CD8-positive, alpha-beta memory T cell (primary cell): ENCODE measurements at regions of chr17 and their contacts with region 1.

Region 1: DNA sequence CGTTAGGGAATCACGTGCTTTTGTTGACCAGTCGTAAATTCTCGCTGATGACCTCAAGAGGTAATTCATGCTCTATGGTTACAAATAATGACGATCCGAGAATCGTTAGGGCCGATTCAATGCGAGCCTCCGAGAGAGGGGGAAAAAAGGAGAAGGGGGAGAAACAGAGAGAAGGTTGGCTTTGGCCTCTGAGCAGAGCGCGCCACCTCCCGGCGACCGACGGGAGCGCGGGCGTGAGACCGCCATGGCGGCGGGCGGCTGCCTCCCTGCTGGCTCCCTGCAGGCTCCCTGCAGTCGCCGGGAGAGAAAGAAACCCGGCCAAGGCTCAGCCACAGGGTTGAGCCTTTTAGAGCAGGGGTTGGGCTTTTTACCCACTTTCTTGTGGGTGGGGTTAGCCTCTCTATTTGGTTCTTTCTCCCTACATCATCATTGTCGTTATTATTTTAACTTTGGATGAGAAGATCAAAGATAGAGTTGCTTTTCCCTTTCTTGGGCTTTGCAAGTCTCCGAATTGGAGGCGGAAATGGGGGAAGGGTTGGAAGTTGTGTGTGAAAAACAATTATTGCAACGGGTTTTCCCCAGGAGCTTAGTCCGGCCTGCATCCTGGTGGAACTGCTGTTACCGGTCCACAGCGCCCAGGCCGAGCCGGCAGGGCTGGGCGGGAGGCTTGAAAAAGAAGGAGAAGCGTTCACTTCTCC is 410 bp upstream of the HOXB5 start:
- DNase-seq: peak; percentile 70 to 84 (median 75)
- H3K4me3 ChIP-seq: peak overlapping the region; percentile 61
- H3K4me3 Mint-ChIP-seq: peak overlapping the region; percentile 77 to 91 (median 86)
- H3K27ac ChIP-seq: no peak overlapping the region
- H3K27ac Mint-ChIP-seq: peak overlapping the region in 1 of 8 donors; percentile 12
- H3K4me1 ChIP-seq: peaks cover 41% of the 10 kb centered on the region
- H3K4me1 Mint-ChIP-seq: peaks cover 45 to 48% (median 48%) of the 10 kb centered on the region in 3 donors
- H3K27me3 ChIP-seq: peaks cover 56% of the 10 kb centered on the region
- H3K27me3 Mint-ChIP-seq: peaks cover 62 to 83% of the 10 kb centered on the region in 2 donors

Region 2: DNA sequence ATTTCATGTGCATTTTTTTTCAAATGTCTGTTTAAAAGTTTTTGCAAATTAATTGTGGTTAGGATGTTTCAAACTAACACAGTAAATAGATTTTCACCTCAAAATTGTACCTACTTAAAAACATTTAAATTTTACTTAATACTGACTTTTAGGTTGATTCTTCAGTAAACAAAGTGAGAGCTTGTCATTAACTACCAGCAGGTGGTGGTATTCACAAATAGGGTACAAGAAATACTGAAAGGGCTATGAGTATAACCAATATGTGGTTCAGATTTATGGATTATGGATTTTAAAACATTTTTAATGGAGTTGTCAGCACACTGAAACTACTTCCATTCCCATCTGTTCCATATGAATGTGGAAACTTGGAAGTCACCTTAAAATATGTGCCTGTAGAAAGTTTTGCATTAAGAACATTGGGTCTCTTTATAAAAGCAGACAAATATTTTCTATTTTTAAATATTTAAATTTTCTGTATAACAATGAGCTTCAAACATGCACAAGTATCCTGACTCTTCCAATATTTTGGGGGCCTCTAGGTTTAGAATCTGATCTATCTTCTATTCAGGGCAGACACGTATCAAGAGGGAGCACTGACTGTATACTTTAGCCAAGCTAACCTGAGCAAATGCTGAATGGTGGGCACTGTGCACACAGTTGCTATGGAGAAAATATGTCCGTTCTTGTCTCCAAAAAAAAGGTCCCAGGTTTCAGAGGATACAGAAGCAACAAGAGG is 330.8 kb before region 1 on chr17:
- CTCF ChIA-PET with region 1: interaction called, 10 read pairs
- POLR2A ChIA-PET with region 1: interaction called, 4 read pairs
- DNase-seq: no peak
- H3K4me3 ChIP-seq: no peak overlapping the region
- H3K4me3 Mint-ChIP-seq: no peak overlapping the region
- H3K27ac ChIP-seq: no peak overlapping the region
- H3K27ac Mint-ChIP-seq: no peak overlapping the region
- H3K4me1 ChIP-seq: peaks cover 8% of the 10 kb centered on the region
- H3K4me1 Mint-ChIP-seq: peaks cover 19 to 43% (median 36%) of the 10 kb centered on the region in 3 donors
- H3K27me3 ChIP-seq: no peaks in the 10 kb centered on the region
- H3K27me3 Mint-ChIP-seq: no peaks in the 10 kb centered on the region

Region 3: GRCh38 chr17:48307814-48308411 is 286.1 kb before region 1 on chr17:
- CTCF ChIA-PET with region 1: interaction called, 13 read pairs
- POLR2A ChIA-PET with region 1: no interaction called
- DNase-seq: peak; percentile 18 to 64 (median 29)
- H3K4me3 ChIP-seq: no peak overlapping the region
- H3K4me3 Mint-ChIP-seq: no peak overlapping the region
- H3K27ac ChIP-seq: no peak overlapping the region
- H3K27ac Mint-ChIP-seq: peak overlapping the region in 5 of 8 donors; percentile 0 to 22 (median 6)
- H3K4me1 ChIP-seq: no peaks in the 10 kb centered on the region
- H3K4me1 Mint-ChIP-seq: peaks cover 15 to 55% (median 44%) of the 10 kb centered on the region in 3 donors
- H3K27me3 ChIP-seq: no peaks in the 10 kb centered on the region
- H3K27me3 Mint-ChIP-seq: no peaks in the 10 kb centered on the region

Region 4: DNA sequence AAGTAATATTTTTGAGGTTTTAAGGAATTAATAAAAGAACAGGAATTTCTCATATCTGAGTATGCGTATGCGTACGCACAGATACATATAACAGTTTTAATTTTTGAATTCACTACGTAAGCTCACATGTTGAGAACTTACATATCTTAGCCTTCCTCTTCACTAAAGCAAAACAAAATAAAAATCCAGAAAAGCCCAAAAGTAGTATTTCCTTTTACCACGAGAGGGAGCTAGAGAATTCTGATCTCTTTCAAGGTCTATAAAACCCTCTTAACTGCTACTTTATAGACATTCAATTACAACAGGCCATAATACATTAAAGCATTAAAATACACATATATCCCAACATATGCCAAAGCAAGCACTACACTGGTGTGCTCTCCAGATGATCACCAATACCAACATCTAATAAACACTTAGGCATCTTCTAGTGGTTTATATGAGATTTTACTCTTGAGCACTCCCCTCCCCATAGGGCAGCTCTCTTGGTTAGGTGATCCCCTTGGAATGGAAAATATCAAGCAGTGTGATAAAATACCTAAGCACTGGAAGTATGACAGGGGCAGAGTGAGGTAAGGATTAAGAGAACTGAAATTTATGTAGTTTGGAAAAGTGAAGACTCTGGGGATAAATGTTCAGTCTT is 258.0 kb before region 1 on chr17:
- CTCF ChIA-PET with region 1: interaction called, 43 read pairs
- POLR2A ChIA-PET with region 1: no interaction called
- DNase-seq: peak in 2 of 5 donors; percentile 48 to 61
- H3K4me3 ChIP-seq: no peak overlapping the region
- H3K4me3 Mint-ChIP-seq: no peak overlapping the region
- H3K27ac ChIP-seq: no peak overlapping the region
- H3K27ac Mint-ChIP-seq: peak overlapping the region in 3 of 8 donors; percentile 7 to 51 (median 45)
- H3K4me1 ChIP-seq: peaks cover 6% of the 10 kb centered on the region
- H3K4me1 Mint-ChIP-seq: peaks cover 5 to 31% (median 18%) of the 10 kb centered on the region in 3 donors
- H3K27me3 ChIP-seq: no peaks in the 10 kb centered on the region
- H3K27me3 Mint-ChIP-seq: no peaks in the 10 kb centered on the region

Region 5: DNA sequence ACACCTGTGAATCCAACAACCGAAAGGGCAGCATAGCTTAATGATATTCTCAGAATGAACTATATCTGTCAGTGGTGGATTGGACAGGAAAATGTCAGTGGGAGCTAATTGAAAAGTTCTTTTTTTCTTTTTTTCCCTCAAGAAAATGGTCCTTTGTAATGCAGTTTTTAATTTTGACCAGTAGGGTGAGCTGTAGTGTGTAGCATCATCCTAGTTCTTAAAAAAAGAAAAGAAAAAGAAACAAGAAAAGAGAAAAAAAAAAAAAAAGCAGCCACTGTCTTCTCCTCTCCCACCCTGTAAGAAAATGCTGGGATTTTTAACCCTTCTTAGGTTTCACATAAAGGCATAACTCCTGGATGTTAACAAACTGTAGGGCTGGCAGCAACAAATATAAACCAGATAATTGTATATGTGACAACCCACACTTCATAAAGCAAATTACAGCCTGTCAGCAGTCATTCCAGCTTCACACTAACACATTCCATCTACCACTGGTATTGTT is 242.1 kb before region 1 on chr17:
- CTCF ChIA-PET with region 1: interaction called, 20 read pairs
- POLR2A ChIA-PET with region 1: no interaction called
- DNase-seq: peak in 2 of 5 donors; percentile 24 to 45
- H3K4me3 ChIP-seq: no peak overlapping the region
- H3K4me3 Mint-ChIP-seq: no peak overlapping the region
- H3K27ac ChIP-seq: no peak overlapping the region
- H3K27ac Mint-ChIP-seq: peak overlapping the region in 4 of 8 donors; percentile 25 to 50 (median 38)
- H3K4me1 ChIP-seq: peaks cover 8% of the 10 kb centered on the region
- H3K4me1 Mint-ChIP-seq: peaks cover 11 to 32% (median 28%) of the 10 kb centered on the region in 3 donors
- H3K27me3 ChIP-seq: no peaks in the 10 kb centered on the region
- H3K27me3 Mint-ChIP-seq: no peaks in the 10 kb centered on the region

Region 6: DNA sequence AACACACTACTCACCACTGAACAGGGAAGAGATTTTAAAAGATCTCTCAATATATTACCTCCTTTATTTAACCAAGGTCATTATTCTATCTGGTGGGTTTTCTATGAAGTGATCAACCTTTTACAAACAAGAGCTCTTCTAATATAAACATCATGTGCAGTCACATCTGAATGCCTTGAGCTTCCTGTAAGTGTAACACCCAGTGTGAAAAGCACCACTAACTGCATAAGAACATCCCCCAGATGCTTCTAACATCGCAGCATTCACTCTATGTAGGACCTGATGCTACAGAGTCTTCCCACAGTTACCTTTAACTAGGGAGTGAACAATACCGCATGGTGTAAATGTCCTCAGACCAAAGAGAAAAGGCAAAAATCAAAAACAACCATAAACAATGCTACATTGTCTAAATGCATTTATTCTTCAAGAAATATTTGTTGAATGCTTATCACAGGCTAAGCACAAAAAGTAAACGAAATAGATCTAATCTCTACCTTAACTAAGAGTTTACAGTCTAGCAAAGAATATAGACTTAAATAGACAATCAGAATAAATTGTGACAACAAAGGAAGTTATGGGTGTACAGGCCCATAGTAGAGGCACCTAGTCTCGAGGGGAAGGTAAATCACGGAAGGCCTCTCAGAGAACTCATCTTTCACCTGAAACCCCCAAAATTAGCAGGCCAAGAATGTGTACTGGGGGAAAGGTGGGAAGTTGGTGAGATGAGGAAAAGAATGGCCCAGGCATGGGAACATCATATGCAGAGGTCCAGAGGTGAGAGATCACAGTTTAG is 180.2 kb before region 1 on chr17:
- CTCF ChIA-PET with region 1: no interaction called
- POLR2A ChIA-PET with region 1: no interaction called
- DNase-seq: peak in 1 of 5 donors; percentile 18
- H3K4me3 ChIP-seq: no peak overlapping the region
- H3K4me3 Mint-ChIP-seq: peak overlapping the region; percentile 29 to 79 (median 70)
- H3K27ac ChIP-seq: no peak overlapping the region
- H3K27ac Mint-ChIP-seq: peak overlapping the region; percentile 80 to 96 (median 91)
- H3K4me1 ChIP-seq: peaks cover 82% of the 10 kb centered on the region
- H3K4me1 Mint-ChIP-seq: peaks cover 77 to 96% (median 90%) of the 10 kb centered on the region in 3 donors
- H3K27me3 ChIP-seq: no peaks in the 10 kb centered on the region
- H3K27me3 Mint-ChIP-seq: no peaks in the 10 kb centered on the region

Region 7: GRCh38 chr17:48492401-48493298 is 101.3 kb before region 1 on chr17:
- CTCF ChIA-PET with region 1: interaction called, 28 read pairs
- POLR2A ChIA-PET with region 1: interaction called, 3 read pairs
- DNase-seq: peak; percentile 43 to 78 (median 55)
- H3K4me3 ChIP-seq: peak overlapping the region; percentile 78
- H3K4me3 Mint-ChIP-seq: peak overlapping the region in 6 of 7 donors; percentile 41 to 81 (median 65)
- H3K27ac ChIP-seq: peak overlapping the region; percentile 57
- H3K27ac Mint-ChIP-seq: peak overlapping the region in 1 of 8 donors; percentile 78
- H3K4me1 ChIP-seq: peaks cover 11% of the 10 kb centered on the region
- H3K4me1 Mint-ChIP-seq: peaks cover 2 to 12% (median 4%) of the 10 kb centered on the region in 3 donors
- H3K27me3 ChIP-seq: peaks cover 8% of the 10 kb centered on the region
- H3K27me3 Mint-ChIP-seq: peaks cover 4 to 12% of the 10 kb centered on the region in 2 donors

Region 8: DNA sequence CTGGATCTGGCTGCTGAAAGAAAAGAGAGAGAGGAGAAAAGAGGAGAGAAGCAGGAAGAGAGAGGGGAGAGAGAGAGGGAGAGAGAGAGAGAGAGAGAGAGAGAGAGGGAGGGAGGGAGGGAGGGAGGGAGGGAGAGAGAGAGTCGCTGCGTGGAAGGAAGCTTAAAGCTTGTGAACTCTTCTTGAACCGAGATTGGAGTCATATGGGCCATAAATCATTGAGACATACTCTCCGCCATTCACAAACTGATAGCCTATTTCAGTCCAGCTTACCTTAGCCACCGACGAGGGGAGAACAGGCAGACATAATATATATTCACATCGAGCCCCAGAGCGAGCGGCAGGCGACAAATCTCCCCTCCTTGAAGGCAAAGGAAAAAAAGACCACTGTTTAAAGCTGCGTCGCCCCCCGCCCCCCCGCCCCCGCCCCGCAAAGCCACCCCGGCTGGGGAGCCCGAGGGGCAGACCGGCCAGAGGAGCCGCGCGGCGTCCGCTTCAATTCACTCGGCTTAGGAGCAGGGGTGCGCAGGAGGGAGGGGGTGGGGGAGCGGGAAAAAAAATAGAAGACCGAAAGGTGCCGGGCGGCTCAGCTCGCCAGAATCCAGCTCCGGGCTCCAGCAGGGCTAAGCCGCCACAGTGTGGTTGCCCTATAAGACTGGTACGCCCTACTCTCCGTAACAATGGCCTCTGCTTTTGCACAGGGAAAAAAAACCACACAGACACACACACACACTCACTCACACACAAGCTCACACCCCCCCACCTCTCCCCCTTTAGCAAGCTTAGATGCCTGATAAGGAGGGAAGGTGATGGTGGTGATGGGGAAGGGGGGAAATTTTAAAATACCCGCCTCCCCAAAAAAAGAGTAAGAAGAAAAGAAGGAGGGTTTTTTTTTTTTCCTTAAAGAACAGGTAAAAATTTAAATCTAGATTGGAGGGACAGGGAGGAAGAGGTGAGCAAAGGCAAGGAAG is 38.4 kb before region 1 on chr17:
- CTCF ChIA-PET with region 1: no interaction called
- POLR2A ChIA-PET with region 1: no interaction called
- DNase-seq: peak in 1 of 5 donors; percentile 26
- H3K4me3 ChIP-seq: no peak overlapping the region
- H3K4me3 Mint-ChIP-seq: peak overlapping the region; percentile 75 to 88 (median 83)
- H3K27ac ChIP-seq: no peak overlapping the region
- H3K27ac Mint-ChIP-seq: peak overlapping the region in 6 of 8 donors; percentile 30 to 91 (median 68)
- H3K4me1 ChIP-seq: no peaks in the 10 kb centered on the region
- H3K4me1 Mint-ChIP-seq: peaks cover 4 to 13% (median 6%) of the 10 kb centered on the region in 3 donors
- H3K27me3 ChIP-seq: no peaks in the 10 kb centered on the region
- H3K27me3 Mint-ChIP-seq: peaks cover 9 to 14% of the 10 kb centered on the region in 2 donors

Region 9: DNA sequence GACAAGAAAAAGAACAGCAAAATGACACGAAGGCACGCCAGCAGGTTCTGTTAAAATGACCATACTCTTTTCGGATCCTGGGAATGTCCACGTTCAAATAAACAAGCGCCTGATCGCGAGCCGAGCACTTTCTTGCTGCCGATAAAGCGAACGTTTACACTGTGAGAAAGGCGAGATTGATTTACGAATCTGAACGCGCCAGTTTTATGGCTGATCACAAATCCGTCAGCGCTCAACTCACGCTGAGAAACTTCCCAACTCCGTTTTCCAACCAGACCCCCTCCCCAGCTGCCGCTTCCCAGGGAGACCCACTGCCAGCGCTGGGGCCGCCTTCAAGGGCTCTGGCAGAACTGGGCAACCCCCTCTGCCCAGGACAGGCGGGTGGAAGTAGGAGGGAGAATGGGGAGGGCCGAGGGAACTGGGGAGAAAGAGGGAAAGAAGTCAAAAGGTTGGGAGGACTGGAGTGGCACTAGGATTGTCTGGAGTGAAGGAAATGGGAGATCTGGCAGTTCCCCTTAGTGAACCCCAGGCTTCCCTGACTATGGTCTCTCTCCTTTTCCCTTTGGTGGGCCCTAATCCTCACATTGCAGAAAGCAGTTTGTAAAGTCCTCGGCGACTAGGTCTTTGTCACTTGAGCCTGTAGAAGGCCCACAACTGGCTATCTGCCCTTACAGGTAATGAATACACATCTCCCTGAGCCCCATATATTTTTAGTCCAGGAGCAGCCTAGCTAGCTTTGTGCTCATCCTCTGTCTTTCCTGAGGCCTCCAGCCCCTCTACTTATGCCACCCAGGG is 22.8 kb before region 1 on chr17:
- CTCF ChIA-PET with region 1: no interaction called
- POLR2A ChIA-PET with region 1: no interaction called
- DNase-seq: peak in 1 of 5 donors; percentile 17
- H3K4me3 ChIP-seq: no peak overlapping the region
- H3K4me3 Mint-ChIP-seq: no peak overlapping the region
- H3K27ac ChIP-seq: no peak overlapping the region
- H3K27ac Mint-ChIP-seq: no peak overlapping the region
- H3K4me1 ChIP-seq: no peaks in the 10 kb centered on the region
- H3K4me1 Mint-ChIP-seq: peaks cover 0 to 8% (median 3%) of the 10 kb centered on the region in 3 donors
- H3K27me3 ChIP-seq: no peaks in the 10 kb centered on the region
- H3K27me3 Mint-ChIP-seq: peaks cover 0 to 7% of the 10 kb centered on the region in 2 donors

Region 10: DNA sequence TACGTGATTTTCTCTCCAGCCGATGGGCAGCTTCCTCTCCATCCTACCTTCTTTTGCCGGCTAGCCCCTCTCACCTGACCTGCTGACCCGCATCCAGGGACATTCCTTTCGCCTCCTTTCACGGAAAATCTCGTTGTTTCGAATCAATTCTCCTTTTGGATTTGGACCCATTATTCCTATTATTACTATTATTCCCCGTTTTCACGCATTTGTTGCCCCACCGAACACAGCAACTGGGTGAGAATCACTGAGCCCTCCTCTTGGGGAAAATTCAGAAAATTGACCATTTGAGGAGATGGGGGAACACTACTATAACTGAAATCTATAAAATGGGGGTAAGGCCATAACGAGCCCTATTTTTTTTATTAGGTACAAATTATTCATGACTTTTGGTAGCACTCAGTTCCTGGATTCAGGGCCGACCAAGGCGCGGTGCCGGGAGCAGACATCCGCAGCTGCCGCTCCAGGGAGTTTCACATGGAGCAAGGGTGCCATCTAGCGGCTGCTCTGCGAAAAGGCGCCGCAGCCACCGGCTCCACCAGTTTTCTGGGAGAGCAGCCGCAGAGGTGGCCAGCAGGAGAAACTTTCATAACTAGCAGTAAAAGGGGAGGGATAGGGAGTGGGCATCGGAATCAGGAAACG is 24.4 kb after region 1 on chr17:
- CTCF ChIA-PET with region 1: interaction called, 18 read pairs
- POLR2A ChIA-PET with region 1: no interaction called
- DNase-seq: peak; percentile 73 to 85 (median 78)
- H3K4me3 ChIP-seq: no peak overlapping the region
- H3K4me3 Mint-ChIP-seq: peak overlapping the region in 6 of 7 donors; percentile 20 to 67 (median 48)
- H3K27ac ChIP-seq: no peak overlapping the region
- H3K27ac Mint-ChIP-seq: peak overlapping the region in 2 of 8 donors; percentile 28 to 92
- H3K4me1 ChIP-seq: peaks cover 33% of the 10 kb centered on the region
- H3K4me1 Mint-ChIP-seq: peaks cover 31 to 48% (median 43%) of the 10 kb centered on the region in 3 donors
- H3K27me3 ChIP-seq: peaks cover 86% of the 10 kb centered on the region
- H3K27me3 Mint-ChIP-seq: peaks cover 87 to 95% of the 10 kb centered on the region in 2 donors